CD4-positive, alpha-beta memory T cell (primary cell): ENCODE measurements at regions of chr14 and their contacts with region 1.

Region 1: DNA sequence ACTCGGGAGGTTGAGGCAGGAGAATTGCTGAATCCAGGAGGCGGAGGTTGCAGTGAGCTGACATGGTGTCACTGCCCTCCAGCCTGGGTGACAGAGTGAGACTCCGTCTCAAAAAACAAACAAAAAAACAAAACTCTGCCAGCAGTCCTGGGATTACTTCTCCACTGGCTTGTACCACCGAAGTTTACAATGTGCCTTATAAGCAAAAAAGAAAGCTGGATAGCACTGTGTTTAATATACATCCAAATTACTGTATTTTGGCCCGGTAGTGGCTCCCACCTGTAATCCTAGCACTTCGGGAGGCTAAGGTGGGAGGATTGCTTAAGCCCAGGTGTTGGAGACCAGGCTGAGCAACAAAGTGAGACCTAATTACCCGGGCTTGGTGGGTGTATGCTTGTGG is 16.7 kb downstream of the HOMEZ start:
- DNase-seq: no peak
- H3K4me3 ChIP-seq: no peak overlapping the region
- H3K4me3 Mint-ChIP-seq: no peak overlapping the region
- H3K27ac ChIP-seq: no peak overlapping the region
- H3K27ac Mint-ChIP-seq: no peak overlapping the region
- H3K4me1 ChIP-seq: no peaks in the 10 kb centered on the region
- H3K4me1 Mint-ChIP-seq: no peaks in the 10 kb centered on the region
- H3K27me3 ChIP-seq: no peaks in the 10 kb centered on the region
- H3K27me3 Mint-ChIP-seq: peaks cover 1 to 7% of the 10 kb centered on the region in 2 donors

Region 2: DNA sequence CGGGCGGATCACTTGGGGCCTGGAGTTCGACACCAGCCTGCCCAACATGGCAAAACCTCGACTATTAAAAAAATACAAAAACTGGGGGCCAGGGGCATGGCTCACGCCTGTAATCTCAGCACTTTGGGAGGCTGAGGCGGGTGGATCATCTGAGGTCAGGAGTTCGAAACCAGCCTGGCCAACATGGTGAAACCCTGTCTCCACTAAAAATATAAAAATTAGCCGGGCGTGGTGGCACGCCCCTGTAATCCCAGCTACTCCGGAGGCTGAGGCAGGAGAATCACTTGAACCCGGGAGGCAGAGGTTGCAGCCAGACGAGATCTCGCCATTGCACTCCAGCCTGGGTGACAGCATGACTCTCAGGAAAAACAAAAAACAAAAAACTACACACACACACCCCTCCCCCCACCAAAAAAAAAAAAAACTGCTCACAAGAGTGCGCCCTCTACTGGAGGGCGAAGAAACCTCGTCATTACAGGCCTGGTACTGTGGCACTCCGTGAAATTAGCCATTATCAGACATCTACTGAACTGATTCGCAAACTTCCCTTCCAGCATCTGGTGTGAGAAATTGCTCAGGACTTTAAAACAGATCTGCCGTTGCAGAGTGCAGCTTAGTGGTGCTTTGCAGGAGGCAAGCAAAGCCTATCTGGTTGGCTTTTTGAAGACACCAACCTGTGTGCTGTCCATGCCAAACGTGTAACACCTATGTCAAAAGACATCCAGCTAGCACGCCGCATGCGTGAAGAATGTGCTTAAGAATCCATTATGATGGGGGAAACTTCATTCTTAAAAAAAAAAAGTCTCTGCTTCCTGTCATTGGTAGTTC is 25.8 kb after region 1 on chr14:
- CTCF ChIA-PET with region 1: interaction called, 8 read pairs
- POLR2A ChIA-PET with region 1: interaction called, 4 read pairs
- intact Hi-C with region 1: loop called (anchors 1 kb)
- DNase-seq: peak; percentile 48 to 75 (median 74)
- H3K4me3 ChIP-seq: no peak overlapping the region
- H3K4me3 Mint-ChIP-seq: peak overlapping the region; percentile 18 to 77 (median 40)
- H3K27ac ChIP-seq: no peak overlapping the region
- H3K27ac Mint-ChIP-seq: peak overlapping the region; percentile 4 to 97 (median 80)
- H3K4me1 ChIP-seq: peaks cover 20% of the 10 kb centered on the region
- H3K4me1 Mint-ChIP-seq: peaks cover 11 to 20% (median 17%) of the 10 kb centered on the region in 4 donors
- H3K27me3 ChIP-seq: no peaks in the 10 kb centered on the region
- H3K27me3 Mint-ChIP-seq: no peaks in the 10 kb centered on the region

Region 3: GRCh38 chr14:23327947-23328744 is 59.0 kb after region 1 on chr14:
- CTCF ChIA-PET with region 1: interaction called, 6 read pairs
- POLR2A ChIA-PET with region 1: no interaction called
- intact Hi-C with region 1: loop called (anchors 1 kb)
- DNase-seq: peak; percentile 48 to 64 (median 60)
- H3K4me3 ChIP-seq: no peak overlapping the region
- H3K4me3 Mint-ChIP-seq: no peak overlapping the region
- H3K27ac ChIP-seq: no peak overlapping the region
- H3K27ac Mint-ChIP-seq: peak overlapping the region in 2 of 7 donors; percentile 28 to 60
- H3K4me1 ChIP-seq: peaks cover 9% of the 10 kb centered on the region
- H3K4me1 Mint-ChIP-seq: peaks cover 3 to 8% (median 5%) of the 10 kb centered on the region in 4 donors
- H3K27me3 ChIP-seq: no peaks in the 10 kb centered on the region
- H3K27me3 Mint-ChIP-seq: peaks cover 0 to 2% of the 10 kb centered on the region in 2 donors